ENCODE measurements at regions of chr17 and their contacts with region 1.

Region 1: GRCh38 chr17:66098040-66098439 is 93.9 kb downstream of the CEP112 start:
- DNase-seq: no peak
- H3K4me3 ChIP-seq: no peak overlapping the region
- H3K27ac ChIP-seq: no peak overlapping the region
- H3K4me1 ChIP-seq: no peaks in the 10 kb centered on the region
- H3K27me3 ChIP-seq: no peaks in the 10 kb centered on the region
- CTCF ChIP-seq: no peak

Region 2: GRCh38 chr17:66143657-66144282 is 45.7 kb after region 1 on chr17:
- intact Hi-C with region 1: loop called (anchors 10 kb)
- DNase-seq: peak; percentile 58
- H3K4me3 ChIP-seq: no peak overlapping the region
- H3K27ac ChIP-seq: peak overlapping the region; percentile 73
- H3K4me1 ChIP-seq: no peaks in the 10 kb centered on the region
- H3K27me3 ChIP-seq: no peaks in the 10 kb centered on the region
- CTCF ChIP-seq: no peak